ENCODE measurements at regions of chr15 and their contacts with region 1.

Region 1: GRCh38 chr15:61169904-61170695 is 59.0 kb downstream of the RORA start:
- DNase-seq: no peak
- ATAC-seq: no peak
- H3K4me3 ChIP-seq: no peak overlapping the region
- H3K27ac ChIP-seq: no peak overlapping the region
- H3K4me1 ChIP-seq: no peaks in the 10 kb centered on the region
- H3K27me3 ChIP-seq: no peaks in the 10 kb centered on the region
- CTCF ChIP-seq: no peak

Region 2: DNA sequence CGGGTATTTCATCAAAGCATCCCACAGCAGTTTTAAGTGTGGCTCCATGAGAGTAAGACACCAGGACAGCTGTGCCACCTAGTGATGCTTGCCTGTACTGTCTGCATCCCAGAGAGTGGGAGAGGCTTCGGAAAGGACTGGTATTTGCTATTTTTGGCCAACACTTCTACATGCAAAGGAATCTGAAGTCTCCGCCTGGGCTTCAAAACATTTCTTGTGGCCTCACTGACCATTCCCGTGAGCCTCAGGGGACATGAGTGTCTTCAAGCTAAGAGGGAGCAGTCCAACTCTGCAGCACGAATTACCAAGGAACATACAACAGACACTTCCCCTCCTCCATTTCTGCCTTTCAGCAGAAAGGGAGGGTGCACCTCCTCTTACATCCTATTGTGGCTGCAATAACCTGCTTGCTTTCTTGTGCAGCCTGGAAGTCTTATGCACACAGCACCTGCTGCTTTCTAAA is 118.5 kb before region 1 on chr15:
- CTCF ChIA-PET with region 1: interaction called, 10 read pairs
- POLR2A ChIA-PET with region 1: no interaction called
- in situ Hi-C with region 1: no loop called
- intact Hi-C with region 1: no loop called
- DNase-seq: no peak
- ATAC-seq: peak; percentile 80
- H3K4me3 ChIP-seq: no peak overlapping the region
- H3K27ac ChIP-seq: no peak overlapping the region
- H3K4me1 ChIP-seq: no peaks in the 10 kb centered on the region
- H3K27me3 ChIP-seq: peaks cover 19% of the 10 kb centered on the region; the same call in 1 of the 2 replicates
- CTCF ChIP-seq: peak; percentile 53

Region 3: GRCh38 chr15:61080221-61081026 is 89.7 kb before region 1 on chr15:
- CTCF ChIA-PET with region 1: interaction called, 10 read pairs
- POLR2A ChIA-PET with region 1: no interaction called
- in situ Hi-C with region 1: no loop called
- intact Hi-C with region 1: no loop called
- DNase-seq: no peak
- ATAC-seq: no peak
- H3K4me3 ChIP-seq: no peak overlapping the region
- H3K27ac ChIP-seq: no peak overlapping the region
- H3K4me1 ChIP-seq: no peaks in the 10 kb centered on the region
- H3K27me3 ChIP-seq: peaks cover 4% of the 10 kb centered on the region
- CTCF ChIP-seq: no peak

Region 4: DNA sequence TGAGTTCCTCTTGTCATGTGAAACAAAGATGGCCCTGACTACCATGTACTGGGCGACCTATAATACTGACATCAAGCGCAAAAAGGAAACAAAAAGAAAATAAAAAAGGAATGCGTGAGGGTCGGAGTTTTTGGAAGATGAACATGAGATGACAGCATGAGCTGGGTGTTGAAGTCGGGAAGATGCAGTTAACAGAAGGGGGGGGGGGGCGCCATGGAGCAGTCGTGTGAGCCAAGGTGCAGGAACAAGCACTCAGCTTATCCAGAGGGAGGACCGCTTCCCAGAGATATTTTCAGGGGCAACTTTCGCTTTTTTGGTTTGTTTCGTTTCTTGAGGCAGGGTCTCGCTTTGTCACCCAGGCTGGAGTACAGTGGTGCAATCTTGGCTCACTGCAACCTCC is 51.2 kb before region 1 on chr15:
- CTCF ChIA-PET with region 1: no interaction called
- POLR2A ChIA-PET with region 1: no interaction called
- in situ Hi-C with region 1: no loop called
- intact Hi-C with region 1: no loop called
- DNase-seq: no peak
- ATAC-seq: no peak
- H3K4me3 ChIP-seq: no peak overlapping the region
- H3K27ac ChIP-seq: no peak overlapping the region
- H3K4me1 ChIP-seq: no peaks in the 10 kb centered on the region
- H3K27me3 ChIP-seq: 0 out of 2 replicates have a peak, but pooled peaks cover 2% of the 10 kb centered on the region
- CTCF ChIP-seq: peak; percentile 55

Region 5: GRCh38 chr15:61253186-61253585 is 83.1 kb after region 1 on chr15:
- CTCF ChIA-PET with region 1: no interaction called
- POLR2A ChIA-PET with region 1: no interaction called
- in situ Hi-C with region 1: no loop called
- intact Hi-C with region 1: no loop called
- DNase-seq: no peak
- ATAC-seq: no peak
- H3K4me3 ChIP-seq: no peak overlapping the region
- H3K27ac ChIP-seq: no peak overlapping the region
- H3K4me1 ChIP-seq: no peaks in the 10 kb centered on the region
- H3K27me3 ChIP-seq: no peaks in the 10 kb centered on the region
- CTCF ChIP-seq: no peak

Region 6: DNA sequence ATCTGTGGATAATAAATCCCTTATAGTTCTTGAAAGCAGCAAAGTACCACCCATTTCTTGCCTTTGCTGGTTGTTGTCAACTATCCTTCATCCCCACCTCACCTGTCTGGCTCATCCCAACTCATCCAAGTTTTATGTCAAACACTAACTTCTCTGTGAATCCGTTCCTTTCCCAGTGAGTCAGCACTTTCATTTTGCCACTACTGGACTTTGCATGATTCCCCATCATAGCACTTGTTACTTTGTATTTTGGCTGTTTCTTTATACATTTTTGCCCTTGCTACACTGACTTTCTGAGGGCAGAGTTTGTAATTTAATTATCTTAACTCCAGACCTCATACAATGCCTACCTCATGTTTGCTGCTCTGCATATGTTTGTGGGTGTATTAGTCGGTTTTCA is 149.8 kb after region 1 on chr15:
- CTCF ChIA-PET with region 1: interaction called, 11 read pairs
- POLR2A ChIA-PET with region 1: no interaction called
- in situ Hi-C with region 1: no loop called
- intact Hi-C with region 1: no loop called
- DNase-seq: no peak
- ATAC-seq: no peak
- H3K4me3 ChIP-seq: no peak overlapping the region
- H3K27ac ChIP-seq: no peak overlapping the region
- H3K4me1 ChIP-seq: no peaks in the 10 kb centered on the region
- H3K27me3 ChIP-seq: no peaks in the 10 kb centered on the region
- CTCF ChIP-seq: no peak

Region 7: DNA sequence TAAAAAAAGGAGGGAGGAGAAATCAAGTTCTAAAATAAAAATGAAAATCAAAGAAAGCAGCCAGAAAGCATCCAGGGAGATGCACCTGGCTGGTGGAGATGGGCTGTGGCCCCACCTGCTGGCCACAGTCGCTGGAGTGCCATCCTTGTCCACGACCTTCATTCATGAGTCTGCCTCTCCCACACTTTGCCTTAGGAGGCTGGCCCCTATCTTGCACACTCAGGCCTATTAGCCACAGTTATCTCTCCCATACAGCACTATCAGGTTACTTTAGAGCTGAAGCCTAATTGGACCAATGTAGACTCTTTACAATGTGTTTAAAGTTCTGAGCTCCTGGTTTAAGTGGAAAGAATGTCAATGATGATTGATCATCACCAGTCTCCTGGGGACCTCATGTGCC is 451.0 kb after region 1 on chr15:
- CTCF ChIA-PET with region 1: no interaction called
- POLR2A ChIA-PET with region 1: no interaction called
- in situ Hi-C with region 1: no loop called
- intact Hi-C with region 1: loop called (anchors 2 kb)
- DNase-seq: no peak
- ATAC-seq: 0 out of 2 replicates have a peak, but pooled peaks have one; percentile 70
- H3K4me3 ChIP-seq: no peak overlapping the region
- H3K27ac ChIP-seq: no peak overlapping the region
- H3K4me1 ChIP-seq: no peaks in the 10 kb centered on the region
- H3K27me3 ChIP-seq: no peaks in the 10 kb centered on the region; the same call in 1 of the 2 replicates
- CTCF ChIP-seq: peak; percentile 70

Region 8: GRCh38 chr15:61834076-61834697 is 664.1 kb after region 1 on chr15:
- CTCF ChIA-PET with region 1: interaction called, 46 read pairs
- POLR2A ChIA-PET with region 1: no interaction called
- in situ Hi-C with region 1: no loop called
- intact Hi-C with region 1: loop called (anchors 1 kb)
- DNase-seq: peak; percentile 65
- ATAC-seq: peak; percentile 82
- H3K4me3 ChIP-seq: no peak overlapping the region
- H3K27ac ChIP-seq: no peak overlapping the region
- H3K4me1 ChIP-seq: peaks cover 7% of the 10 kb centered on the region; the same call in 1 of the 2 replicates
- H3K27me3 ChIP-seq: no peaks in the 10 kb centered on the region; the same call in 1 of the 2 replicates
- CTCF ChIP-seq: peak; percentile 94

Measured in Panc1 (cell line).